MCF 10A (cell line): ENCODE measurements at regions of chr6 and their contacts with region 1.

Region 1: GRCh38 chr6:34810936-34811632 is 19.2 kb downstream of the BLTP3A start:
- DNase-seq: peak; percentile 67
- H3K4me3 Mint-ChIP-seq: no peak overlapping the region
- H3K27ac Mint-ChIP-seq: peak overlapping the region; percentile 71
- H3K4me1 Mint-ChIP-seq: peaks cover 15% of the 10 kb centered on the region
- H3K27me3 Mint-ChIP-seq: no peaks in the 10 kb centered on the region
- CTCF ChIP-seq: no peak

Region 2: GRCh38 chr6:34829137-34829536 is 18.1 kb after region 1 on chr6:
- CTCF ChIA-PET with region 1: no interaction called
- POLR2A ChIA-PET with region 1: interaction called, 14 read pairs
- intact Hi-C with region 1: no loop called
- DNase-seq: no peak
- H3K4me3 Mint-ChIP-seq: no peak overlapping the region
- H3K27ac Mint-ChIP-seq: peak overlapping the region; percentile 85
- H3K4me1 Mint-ChIP-seq: peaks cover 7% of the 10 kb centered on the region
- H3K27me3 Mint-ChIP-seq: no peaks in the 10 kb centered on the region
- CTCF ChIP-seq: no peak

Region 3: GRCh38 chr6:35024551-35025054 is 213.5 kb after region 1 on chr6:
- CTCF ChIA-PET with region 1: no interaction called
- POLR2A ChIA-PET with region 1: no interaction called
- intact Hi-C with region 1: no loop called
- DNase-seq: peak; percentile 65
- H3K4me3 Mint-ChIP-seq: no peak overlapping the region
- H3K27ac Mint-ChIP-seq: peak overlapping the region; percentile 89
- H3K4me1 Mint-ChIP-seq: peaks cover 29% of the 10 kb centered on the region
- H3K27me3 Mint-ChIP-seq: no peaks in the 10 kb centered on the region
- CTCF ChIP-seq: no peak